ENCODE measurements at regions of chr12 and their contacts with region 1.

Region 1: GRCh38 chr12:9673404-9674225 is 4.1 kb downstream of the CLEC2D start:
- DNase-seq: peak; percentile 75
- H3K4me3 Mint-ChIP-seq: peak overlapping the region; percentile 92
- H3K27ac Mint-ChIP-seq: peak overlapping the region; percentile 98
- H3K4me1 Mint-ChIP-seq: peaks cover 41% of the 10 kb centered on the region
- H3K27me3 Mint-ChIP-seq: no peaks in the 10 kb centered on the region

Region 2: DNA sequence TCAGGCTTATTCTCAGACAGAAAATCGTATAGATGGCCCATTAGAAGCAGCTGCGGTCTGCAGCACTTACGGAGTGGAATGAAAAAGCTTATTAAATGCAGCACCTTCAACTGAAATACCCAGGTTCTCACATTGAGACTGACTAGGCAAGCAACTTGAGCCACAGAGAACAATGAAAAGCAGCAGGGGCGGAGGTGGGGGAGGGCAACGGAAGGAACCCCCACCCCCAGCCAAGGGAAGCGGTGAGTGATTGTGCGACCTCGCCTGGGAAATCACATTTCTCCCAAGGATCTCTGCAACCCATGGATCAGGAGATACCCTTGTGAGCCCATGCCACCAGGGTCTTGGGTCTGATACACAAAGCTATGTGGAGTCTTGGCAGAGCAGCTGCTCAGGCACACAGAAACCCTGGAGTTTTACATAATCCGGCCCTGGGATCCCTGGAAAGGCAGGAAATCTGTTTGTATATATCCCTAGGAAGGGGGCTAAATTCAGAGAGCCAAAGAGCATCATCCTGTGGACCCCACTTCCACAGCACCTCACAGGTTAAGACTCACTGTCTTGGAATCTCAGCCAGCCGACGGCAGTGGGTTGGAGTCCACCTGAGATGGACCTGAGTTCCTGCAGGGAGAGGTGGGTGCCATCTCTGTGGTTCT is 503.5 kb before region 1 on chr12:
- CTCF ChIA-PET with region 1: no interaction called
- POLR2A ChIA-PET with region 1: no interaction called
- DNase-seq: no peak
- H3K4me3 Mint-ChIP-seq: no peak overlapping the region
- H3K27ac Mint-ChIP-seq: no peak overlapping the region
- H3K4me1 Mint-ChIP-seq: no peaks in the 10 kb centered on the region
- H3K27me3 Mint-ChIP-seq: no peaks in the 10 kb centered on the region

Region 3: GRCh38 chr12:9662500-9662899 is 11.1 kb before region 1 on chr12:
- CTCF ChIA-PET with region 1: interaction called, 5 read pairs
- POLR2A ChIA-PET with region 1: interaction called, 1,071 read pairs
- DNase-seq: no peak
- H3K4me3 Mint-ChIP-seq: no peak overlapping the region
- H3K27ac Mint-ChIP-seq: peak overlapping the region; percentile 63
- H3K4me1 Mint-ChIP-seq: peaks cover 83% of the 10 kb centered on the region
- H3K27me3 Mint-ChIP-seq: no peaks in the 10 kb centered on the region

Region 4: DNA sequence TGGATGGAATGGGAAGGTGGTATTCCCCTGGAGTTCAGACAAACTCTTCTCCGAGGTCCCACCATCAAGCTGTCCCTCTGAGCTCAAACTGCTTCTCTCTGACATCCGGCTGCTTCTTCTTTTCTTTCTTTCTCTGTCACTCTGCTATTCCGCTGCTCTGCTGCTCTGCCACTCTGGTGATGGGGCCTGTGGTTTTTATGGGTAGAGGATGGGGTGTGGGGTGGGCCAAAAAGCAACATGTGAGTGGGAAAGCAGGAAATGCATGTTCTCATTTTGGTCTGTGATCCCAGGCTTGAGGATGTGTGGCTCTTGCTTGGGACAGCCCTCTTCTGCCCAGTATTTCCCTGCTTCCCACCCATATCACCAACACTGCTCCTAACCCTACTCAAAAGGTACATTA is 28.6 kb after region 1 on chr12:
- CTCF ChIA-PET with region 1: no interaction called
- POLR2A ChIA-PET with region 1: interaction called, 17 read pairs
- DNase-seq: peak; percentile 75
- H3K4me3 Mint-ChIP-seq: peak overlapping the region; percentile 43
- H3K27ac Mint-ChIP-seq: peak overlapping the region; percentile 85
- H3K4me1 Mint-ChIP-seq: peaks cover 72% of the 10 kb centered on the region
- H3K27me3 Mint-ChIP-seq: no peaks in the 10 kb centered on the region

Region 5: DNA sequence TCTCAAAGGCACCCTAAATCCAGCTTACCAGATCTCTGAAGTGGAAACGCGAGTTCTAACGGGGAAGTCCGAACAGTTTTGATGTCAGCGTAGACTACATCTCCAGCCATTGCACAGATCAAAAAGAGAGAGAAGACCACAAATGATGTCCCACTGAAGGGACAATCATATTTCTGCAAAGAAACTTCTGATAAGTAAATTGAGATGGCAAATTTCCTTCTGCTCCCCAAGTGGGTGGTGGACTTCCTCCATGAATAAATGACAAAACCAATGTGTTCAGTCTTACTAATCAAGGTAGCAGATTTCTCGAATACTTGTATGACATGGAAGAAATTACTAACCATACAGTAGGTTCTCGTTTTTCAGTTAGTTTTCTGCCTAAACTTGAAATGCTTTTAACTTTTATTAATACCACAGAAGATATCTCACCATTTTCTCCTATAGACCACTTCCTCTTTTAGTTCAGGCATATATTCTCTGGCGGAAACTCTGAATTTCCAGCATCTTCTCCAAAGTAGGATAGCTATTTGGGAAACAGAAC is 59.4 kb after region 1 on chr12 and contains the start of gene CLECL1:
- CTCF ChIA-PET with region 1: no interaction called
- POLR2A ChIA-PET with region 1: interaction called, 121 read pairs
- DNase-seq: no peak
- H3K4me3 Mint-ChIP-seq: peak within 1 kb of the TSS; percentile 92
- H3K27ac Mint-ChIP-seq: peak within 1 kb of the TSS; percentile 94
- H3K4me1 Mint-ChIP-seq: peaks cover 62% of the 10 kb centered on the region
- H3K27me3 Mint-ChIP-seq: peaks cover 2% of the 10 kb centered on the region
- total RNA-seq, gene CLECL1: 13.5 to 15.4 TPM

Region 6: DNA sequence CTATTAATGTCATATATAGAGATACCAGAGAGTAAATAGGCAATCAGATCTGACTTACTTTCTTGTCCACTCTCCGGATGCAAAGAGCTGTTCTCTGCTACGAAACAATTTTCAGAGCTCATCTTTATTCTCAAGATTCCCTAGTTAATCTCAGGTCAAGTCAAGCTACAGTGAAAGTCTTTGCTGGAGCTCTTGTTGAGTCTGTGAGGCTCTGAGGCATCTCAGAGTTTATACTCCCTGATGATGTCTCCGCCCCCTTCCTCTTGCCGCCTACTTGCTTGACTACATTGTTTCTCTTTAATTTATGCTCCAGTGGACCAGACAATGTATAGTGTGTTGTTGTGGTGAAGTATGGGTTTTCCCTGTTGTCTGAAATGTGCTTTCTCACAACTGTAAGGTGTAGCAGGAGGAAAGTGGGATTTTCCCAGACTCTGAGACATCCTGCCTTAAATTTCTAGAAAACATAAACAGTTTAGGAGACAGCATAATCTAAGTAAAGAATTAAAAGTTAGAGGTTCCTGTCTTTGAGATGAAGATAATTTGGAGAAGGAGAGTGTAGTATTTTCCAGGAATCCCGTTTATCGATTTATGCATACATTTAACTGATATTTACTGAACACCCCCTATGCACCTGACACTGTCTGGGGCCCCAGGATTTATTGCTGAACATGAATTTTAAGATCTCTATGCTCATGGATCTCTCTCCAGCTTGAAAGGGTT is 87.2 kb after region 1 on chr12 and contains the start of gene CD69:
- CTCF ChIA-PET with region 1: interaction called, 5 read pairs
- POLR2A ChIA-PET with region 1: interaction called, 283 read pairs
- DNase-seq: peak; percentile 88
- H3K4me3 Mint-ChIP-seq: peak within 1 kb of the TSS; percentile 99
- H3K27ac Mint-ChIP-seq: peak within 1 kb of the TSS; percentile 86
- H3K4me1 Mint-ChIP-seq: peaks cover 53% of the 10 kb centered on the region
- H3K27me3 Mint-ChIP-seq: no peaks in the 10 kb centered on the region
- total RNA-seq, gene CD69: 196 to 197 TPM

Measured in activated CD4-positive, alpha-beta memory T cell treated with anti-CD3 and anti-CD28 coated beads, Interleukin-2, amount 10 ng/mL, durations not matched to agents 7 days and 5 days (primary cell).